Activated B cell treated with CpG ODN at 0.5 μM for 24 hours (primary cell): ENCODE measurements at regions of chrX and their contacts with region 1.

Region 1: GRCh38 chrX:46758906-46759644 is at the start of gene SLC9A7:
- DNase-seq: peak; percentile 81
- ATAC-seq: peak; percentile 68
- H3K4me3 Mint-ChIP-seq: peak within 1 kb of the TSS; percentile 96
- H3K27ac Mint-ChIP-seq: peak within 1 kb of the TSS; percentile 93
- H3K4me1 Mint-ChIP-seq: peaks cover 44% of the 10 kb centered on the region
- H3K27me3 Mint-ChIP-seq: no peaks in the 10 kb centered on the region
- CTCF ChIP-seq: no peak
- total RNA-seq, gene SLC9A7: 44.5 and 55.1 TPM in 2 replicates

Region 2: DNA sequence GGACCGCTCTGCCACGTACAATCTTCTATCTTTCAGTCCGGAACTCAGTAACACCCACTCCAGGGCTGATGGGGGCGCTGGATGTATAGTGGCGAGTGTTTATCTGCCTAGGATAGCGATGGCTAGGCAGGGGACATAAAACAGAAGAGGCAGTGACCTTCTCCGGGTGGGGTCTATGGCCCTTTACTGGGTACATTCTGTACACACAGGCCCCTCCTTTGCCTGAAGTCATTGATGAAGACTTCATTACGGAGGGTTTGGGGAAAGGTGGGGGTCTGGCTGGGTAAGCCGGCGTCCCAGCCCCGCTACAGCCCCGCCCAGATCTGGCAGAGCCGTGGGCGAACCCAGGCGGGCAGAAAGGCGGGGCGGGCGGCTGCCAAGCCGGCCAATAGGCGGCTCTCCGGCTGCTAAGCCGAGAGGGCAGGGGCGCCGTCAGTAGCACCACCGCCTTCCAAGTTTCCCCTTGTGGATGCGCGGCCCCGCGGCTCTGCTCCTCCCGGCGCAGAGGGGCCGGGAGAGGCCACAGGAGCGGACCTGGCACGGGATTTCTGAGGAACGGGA is 185.7 kb before region 1 on chrX and contains the start of gene CHST7:
- CTCF ChIA-PET with region 1: no interaction called
- POLR2A ChIA-PET with region 1: interaction called, 4 read pairs
- intact Hi-C with region 1: loop called (anchors 5 kb)
- DNase-seq: peak; percentile 53
- ATAC-seq: peak; percentile 65
- H3K4me3 Mint-ChIP-seq: peak within 1 kb of the TSS; percentile 85
- H3K27ac Mint-ChIP-seq: peak within 1 kb of the TSS; percentile 91
- H3K4me1 Mint-ChIP-seq: peaks cover 49% of the 10 kb centered on the region
- H3K27me3 Mint-ChIP-seq: no peaks in the 10 kb centered on the region
- CTCF ChIP-seq: no peak
- total RNA-seq, gene CHST7: 6.3 and 7.5 TPM in 2 replicates

Region 3: GRCh38 chrX:46693149-46693548 is 65.9 kb before region 1 on chrX:
- CTCF ChIA-PET with region 1: no interaction called
- POLR2A ChIA-PET with region 1: interaction called, 7 read pairs
- intact Hi-C with region 1: loop called (anchors 2 kb)
- DNase-seq: no peak
- ATAC-seq: peak; percentile 49
- H3K4me3 Mint-ChIP-seq: peak overlapping the region; percentile 55
- H3K27ac Mint-ChIP-seq: no peak overlapping the region
- H3K4me1 Mint-ChIP-seq: peaks cover 47% of the 10 kb centered on the region
- H3K27me3 Mint-ChIP-seq: no peaks in the 10 kb centered on the region
- CTCF ChIP-seq: no peak

Region 4: GRCh38 chrX:46812445-46812844 is 53.4 kb after region 1 on chrX:
- CTCF ChIA-PET with region 1: no interaction called
- POLR2A ChIA-PET with region 1: no interaction called
- intact Hi-C with region 1: no loop called
- DNase-seq: no peak
- ATAC-seq: no peak
- H3K4me3 Mint-ChIP-seq: no peak overlapping the region
- H3K27ac Mint-ChIP-seq: no peak overlapping the region
- H3K4me1 Mint-ChIP-seq: no peaks in the 10 kb centered on the region
- H3K27me3 Mint-ChIP-seq: no peaks in the 10 kb centered on the region
- CTCF ChIP-seq: no peak

Region 5: DNA sequence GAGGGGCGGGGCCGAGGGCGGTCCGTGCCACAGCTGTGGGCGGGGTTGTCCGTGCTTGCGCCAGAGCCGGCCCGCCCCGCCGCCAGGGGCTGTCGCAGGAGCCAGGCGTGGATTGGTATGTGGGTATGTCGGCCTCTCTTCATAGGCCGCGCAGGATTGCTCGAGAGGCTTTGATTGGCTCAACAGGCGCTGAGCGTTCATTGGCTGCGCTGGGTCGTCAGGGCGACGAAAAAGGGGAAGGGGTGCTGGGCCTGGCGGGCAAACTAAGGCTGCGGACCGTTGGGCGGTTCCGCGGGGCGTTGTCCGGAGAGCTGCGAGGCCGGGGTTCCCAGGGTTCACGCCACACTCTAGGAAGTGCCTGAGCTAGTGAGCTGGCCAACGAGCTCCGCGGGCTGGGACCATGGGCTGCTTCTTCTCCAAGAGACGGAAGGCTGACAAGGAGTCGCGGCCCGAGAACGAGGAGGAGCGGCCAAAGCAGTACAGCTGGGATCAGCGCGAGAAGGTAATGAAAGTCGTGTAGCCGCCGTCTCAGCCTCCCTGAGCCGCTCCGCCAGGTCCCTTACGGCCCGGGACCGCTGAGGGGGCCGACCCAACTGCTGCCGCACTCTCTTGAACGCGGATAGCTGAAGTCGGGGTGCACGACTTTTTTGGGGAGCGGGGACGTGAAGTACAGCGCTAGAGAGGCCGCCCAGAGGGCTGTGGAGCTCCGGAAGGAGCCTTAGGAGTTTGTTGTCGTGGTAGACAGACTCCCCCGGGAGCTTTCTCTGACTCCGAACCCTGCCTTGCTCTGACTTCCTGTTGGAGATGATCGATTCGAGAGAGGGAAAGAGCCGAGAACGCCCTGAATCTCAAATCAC is 77.9 kb after region 1 on chrX and contains the start of gene RP2:
- CTCF ChIA-PET with region 1: no interaction called
- POLR2A ChIA-PET with region 1: interaction called, 3 read pairs
- intact Hi-C with region 1: loop called (anchors 2 kb)
- DNase-seq: peak; percentile 77
- ATAC-seq: peak; percentile 93
- H3K4me3 Mint-ChIP-seq: peak within 1 kb of the TSS; percentile 95
- H3K27ac Mint-ChIP-seq: peak within 1 kb of the TSS; percentile 94
- H3K4me1 Mint-ChIP-seq: peaks cover 37% of the 10 kb centered on the region
- H3K27me3 Mint-ChIP-seq: no peaks in the 10 kb centered on the region
- CTCF ChIP-seq: no peak
- total RNA-seq, gene RP2: 11.3 TPM in 2 replicates

Region 6: GRCh38 chrX:47030339-47030738 is 271.3 kb after region 1 on chrX:
- CTCF ChIA-PET with region 1: no interaction called
- POLR2A ChIA-PET with region 1: no interaction called
- intact Hi-C with region 1: loop called (anchors 1 kb)
- DNase-seq: no peak
- ATAC-seq: no peak
- H3K4me3 Mint-ChIP-seq: no peak overlapping the region
- H3K27ac Mint-ChIP-seq: no peak overlapping the region
- H3K4me1 Mint-ChIP-seq: peaks cover 6% of the 10 kb centered on the region
- H3K27me3 Mint-ChIP-seq: no peaks in the 10 kb centered on the region
- CTCF ChIP-seq: no peak